ENCODE measurements at regions of chr1 and their contacts with region 1.

Region 1: GRCh38 chr1:1122078-1122811 is 6.4 kb upstream of the C1orf159 start:
- DNase-seq: peak; percentile 59
- ATAC-seq: peak; percentile 97
- H3K4me3 ChIP-seq: no peak overlapping the region
- H3K27ac ChIP-seq: no peak overlapping the region
- H3K4me1 ChIP-seq: no peaks in the 10 kb centered on the region
- H3K27me3 ChIP-seq: no peaks in the 10 kb centered on the region; the same call in 1 of the 2 replicates
- CTCF ChIP-seq: peak; percentile 91
- POLR2A ChIP-seq: peak; percentile 47; the same call in 1 of the 2 replicates
- RAD21 ChIP-seq: peak; percentile 96

Region 2: GRCh38 chr1:1231400-1232223 is 109.4 kb after region 1 on chr1 and contains the start of gene SDF4:
- CTCF ChIA-PET with region 1: interaction called, 11 read pairs
- POLR2A ChIA-PET with region 1: no interaction called
- dilution Hi-C with region 1: no loop called
- in situ Hi-C with region 1: no loop called
- intact Hi-C with region 1: loop called (anchors 1 kb)
- DNase-seq: peak; percentile 95
- ATAC-seq: peak; percentile 94
- H3K4me3 ChIP-seq: peak within 1 kb of the TSS; percentile 84
- H3K27ac ChIP-seq: peak within 1 kb of the TSS; percentile 81
- H3K4me1 ChIP-seq: peaks cover 13% of the 10 kb centered on the region; the same call in 1 of the 2 replicates
- H3K27me3 ChIP-seq: no peaks in the 10 kb centered on the region
- CTCF ChIP-seq: no peak
- POLR2A ChIP-seq: peak; percentile 93
- RAD21 ChIP-seq: 0 out of 2 replicates have a peak, but pooled peaks have one; percentile 1
- total RNA-seq, gene SDF4: 57.0 and 69.4 TPM in 2 replicates

Region 3: DNA sequence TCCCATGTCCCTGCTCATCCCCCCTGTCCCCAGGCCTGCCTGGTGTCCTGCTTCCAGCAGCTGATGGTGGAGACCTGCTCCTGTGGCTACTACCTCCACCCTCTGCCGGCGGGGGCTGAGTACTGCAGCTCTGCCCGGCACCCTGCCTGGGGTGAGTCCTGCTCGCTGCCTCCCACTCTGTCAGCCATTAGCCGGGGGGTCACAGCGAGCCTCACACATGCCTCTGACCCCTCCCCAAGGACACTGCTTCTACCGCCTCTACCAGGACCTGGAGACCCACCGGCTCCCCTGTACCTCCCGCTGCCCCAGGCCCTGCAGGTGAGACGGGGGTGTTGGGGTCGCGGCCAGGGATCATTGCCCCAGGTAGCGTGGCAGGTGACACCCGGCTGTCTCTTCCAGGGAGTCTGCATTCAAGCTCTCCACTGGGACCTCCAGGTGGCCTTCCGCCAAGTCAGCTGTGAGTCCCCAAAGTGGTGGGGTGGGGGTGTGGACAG is 168.0 kb after region 1 on chr1:
- CTCF ChIA-PET with region 1: interaction called, 4 read pairs
- POLR2A ChIA-PET with region 1: no interaction called
- dilution Hi-C with region 1: no loop called
- in situ Hi-C with region 1: no loop called
- intact Hi-C with region 1: loop called (anchors 1 kb)
- DNase-seq: no peak
- ATAC-seq: peak; percentile 87
- H3K4me3 ChIP-seq: no peak overlapping the region
- H3K27ac ChIP-seq: no peak overlapping the region
- H3K4me1 ChIP-seq: no peaks in the 10 kb centered on the region; the same call in 1 of the 2 replicates
- H3K27me3 ChIP-seq: no peaks in the 10 kb centered on the region
- CTCF ChIP-seq: peak; percentile 64
- POLR2A ChIP-seq: no peak
- RAD21 ChIP-seq: peak; percentile 63

Region 4: DNA sequence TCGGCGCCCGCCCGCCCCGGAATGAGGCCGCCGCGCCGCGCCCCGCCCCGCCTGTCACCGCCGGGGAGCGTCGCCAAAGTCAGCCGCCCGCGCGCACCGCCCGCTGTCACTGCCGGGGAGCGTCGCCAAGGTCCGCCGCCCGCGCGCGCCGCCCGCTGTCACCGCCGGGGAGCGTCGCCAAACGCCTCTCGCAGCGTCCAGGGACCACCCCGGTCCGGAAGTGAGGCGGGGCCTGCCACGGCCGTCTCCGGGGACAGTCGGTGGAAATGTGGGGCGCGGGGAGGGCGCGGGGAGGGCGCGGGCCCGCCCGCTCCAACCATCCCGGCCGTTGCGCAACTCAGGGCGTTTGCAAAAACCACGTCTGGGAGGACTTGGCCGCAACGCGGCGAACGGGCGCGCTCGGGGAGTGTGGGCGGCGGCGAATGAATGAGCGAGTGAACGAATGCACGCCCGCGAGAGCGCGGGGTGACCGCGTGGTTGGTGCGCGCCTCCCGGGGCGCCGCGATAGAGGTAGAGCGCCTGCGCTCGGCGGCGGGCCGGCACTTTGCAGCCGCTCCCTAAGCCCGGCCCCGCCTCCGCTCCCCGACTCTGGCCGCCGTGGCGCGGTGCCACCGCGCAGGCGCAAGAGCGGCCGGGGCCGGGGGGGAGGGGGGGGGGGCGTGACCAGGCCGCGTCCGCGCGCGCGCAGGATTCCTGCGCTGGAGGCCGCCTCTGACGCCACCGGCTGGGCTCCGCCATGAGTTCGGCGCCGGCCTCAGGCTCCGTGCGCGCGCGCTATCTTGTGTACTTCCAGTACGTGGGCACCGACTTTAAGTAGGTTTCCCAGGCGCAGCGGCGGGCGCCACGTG is 185.9 kb after region 1 on chr1 and contains the starts of genes ACAP3 and PUSL1:
- CTCF ChIA-PET with region 1: interaction called, 3 read pairs
- POLR2A ChIA-PET with region 1: no interaction called
- dilution Hi-C with region 1: no loop called
- in situ Hi-C with region 1: no loop called
- intact Hi-C with region 1: loop called (anchors 5 kb)
- DNase-seq: peak; percentile 92
- ATAC-seq: peak; percentile 70
- H3K4me3 ChIP-seq: peak within 1 kb of the TSS; percentile 95
- H3K27ac ChIP-seq: peak within 1 kb of the TSS; percentile 94
- H3K4me1 ChIP-seq: peaks cover 31% of the 10 kb centered on the region
- H3K27me3 ChIP-seq: no peaks in the 10 kb centered on the region
- CTCF ChIP-seq: no peak
- POLR2A ChIP-seq: peak; percentile 69
- RAD21 ChIP-seq: no peak
- total RNA-seq, gene ACAP3: 13.3 and 15.3 TPM in 2 replicates
- total RNA-seq, gene PUSL1: 10.9 and 13.3 TPM in 2 replicates

Measured in IMR-90 (cell line).